ENCODE measurements at regions of chr3 and their contacts with region 1.

Region 1: GRCh38 chr3:57572096-57572495 is 16.0 kb downstream of the PDE12 start:
- DNase-seq: no peak
- H3K4me3 ChIP-seq: no peak overlapping the region
- H3K27ac ChIP-seq: no peak overlapping the region
- H3K4me1 ChIP-seq: peaks cover 0 to 4% (median 0%) of the 10 kb centered on the region in 4 experiments
- H3K27me3 ChIP-seq: no peaks in the 10 kb centered on the region

Region 2: GRCh38 chr3:57555738-57556458 is 16.2 kb before region 1 on chr3 and contains the start of gene PDE12:
- CTCF ChIA-PET with region 1: interaction called, 12 read pairs
- POLR2A ChIA-PET with region 1: interaction called, 7 read pairs
- DNase-seq: peak; percentile 90 to 94 (median 92)
- H3K4me3 ChIP-seq: peak within 1 kb of the TSS; percentile 58 to 94 (median 81)
- H3K27ac ChIP-seq: peak within 1 kb of the TSS; percentile 96 to 98
- H3K4me1 ChIP-seq: peaks cover 8 to 31% (median 26%) of the 10 kb centered on the region in 4 experiments
- H3K27me3 ChIP-seq: no peaks in the 10 kb centered on the region

Region 3: GRCh38 chr3:57974796-57975388 is 402.8 kb after region 1 on chr3:
- CTCF ChIA-PET with region 1: no interaction called
- POLR2A ChIA-PET with region 1: no interaction called
- DNase-seq: no peak
- H3K4me3 ChIP-seq: no peak overlapping the region
- H3K27ac ChIP-seq: no peak overlapping the region
- H3K4me1 ChIP-seq: peaks cover 0 to 14% (median 8%) of the 10 kb centered on the region in 4 experiments
- H3K27me3 ChIP-seq: no peaks in the 10 kb centered on the region